GM18951 (cell line): ENCODE measurements at regions of chr5 and their contacts with region 1.

Region 1: DNA sequence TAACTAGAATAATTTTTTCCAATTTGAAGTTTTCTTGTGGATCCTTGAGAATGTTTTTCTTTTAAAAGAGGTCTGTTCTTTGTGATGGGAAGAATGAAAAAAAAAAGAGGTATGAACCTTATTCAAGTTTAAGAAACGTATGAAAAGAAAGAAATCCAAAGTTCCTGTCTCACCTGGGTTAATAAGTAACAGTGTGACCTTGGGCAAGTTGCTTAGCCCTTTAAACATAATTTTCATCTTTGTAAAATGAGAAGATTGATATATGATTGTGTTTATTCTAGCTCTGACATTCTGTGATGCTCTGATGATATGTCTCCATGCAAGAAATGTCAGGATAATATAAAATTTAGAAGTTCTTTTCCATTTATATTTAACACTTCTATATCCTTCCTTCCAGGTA is 19.3 kb downstream of the SLC26A2 start:
- POLR2A ChIP-seq: no peak

Region 2: DNA sequence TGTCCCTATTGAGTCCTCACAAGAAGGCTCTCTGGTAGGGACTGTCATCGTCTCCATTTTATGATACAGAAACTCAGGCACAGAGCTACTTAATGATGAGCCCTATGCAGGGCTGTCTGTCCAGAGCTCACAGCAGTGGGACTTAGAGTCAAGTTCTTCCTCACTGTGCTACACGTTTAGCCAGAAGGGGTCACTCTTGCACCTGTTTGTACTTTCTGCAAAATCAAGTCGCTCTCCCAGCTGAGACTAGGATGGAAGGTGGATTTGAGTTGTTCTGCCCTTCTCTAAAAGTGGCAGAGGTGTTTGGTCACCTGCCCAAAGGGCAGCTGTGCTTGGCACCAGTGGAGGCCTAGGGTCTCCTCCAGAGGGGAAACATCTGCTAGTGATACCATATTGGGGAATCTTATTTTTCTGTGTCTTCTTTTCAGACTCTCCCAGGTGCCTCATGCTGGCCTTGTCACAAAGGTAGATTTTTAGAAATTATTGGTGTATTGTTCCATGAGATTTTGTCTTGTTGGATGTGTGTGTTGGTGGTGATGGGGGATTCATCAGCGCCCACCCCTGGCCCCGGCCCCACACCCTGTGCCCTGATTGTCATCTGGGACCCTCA is 145.5 kb before region 1 on chr5:
- in situ Hi-C with region 1: loop called (anchors 10 kb)
- POLR2A ChIP-seq: no peak